Naive thymus-derived CD4-positive, alpha-beta T cell (primary cell): ENCODE measurements at regions of chr6 and their contacts with region 1.

Region 1: GRCh38 chr6:52337633-52338290 is 24.2 kb upstream of the PAQR8 start:
- DNase-seq: no peak
- ATAC-seq: no peak
- H3K4me3 ChIP-seq: no peak overlapping the region
- H3K4me3 Mint-ChIP-seq: peak overlapping the region in 2 of 10 donors; percentile 8 to 68
- H3K27ac ChIP-seq: no peak overlapping the region
- H3K27ac Mint-ChIP-seq: peak overlapping the region in 8 of 9 donors; percentile 11 to 94 (median 46)
- H3K4me1 ChIP-seq: peaks cover 28 to 58% of the 10 kb centered on the region in 2 donors
- H3K4me1 Mint-ChIP-seq: peaks cover 45 to 79% (median 75%) of the 10 kb centered on the region in 7 donors
- H3K27me3 ChIP-seq: no peaks in the 10 kb centered on the region
- H3K27me3 Mint-ChIP-seq: no peaks in the 10 kb centered on the region

Region 2: DNA sequence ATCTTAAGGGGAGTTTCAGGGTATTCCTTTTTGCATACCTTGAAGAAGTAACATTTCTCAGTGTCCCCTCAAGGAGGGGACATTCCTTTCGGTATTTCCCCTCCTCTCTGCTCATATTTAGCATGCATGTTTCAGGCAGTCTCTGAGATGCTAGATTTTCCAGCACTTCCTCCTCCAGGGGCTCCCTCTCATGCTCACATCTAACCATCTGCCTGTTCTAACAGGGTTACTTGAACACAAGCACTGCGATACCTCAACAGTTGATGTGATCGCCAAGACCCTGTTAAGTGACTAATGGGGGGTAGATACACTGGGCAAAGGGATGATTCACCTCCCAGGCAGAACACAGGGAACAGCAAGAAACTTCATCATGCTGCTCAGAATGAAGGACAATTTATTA is 40.3 kb before region 1 on chr6:
- CTCF ChIA-PET with region 1: no interaction called
- POLR2A ChIA-PET with region 1: no interaction called
- intact Hi-C with region 1: loop called in 1 of 2 experiments (anchors 5 kb)
- DNase-seq: no peak
- ATAC-seq: no peak
- H3K4me3 ChIP-seq: no peak overlapping the region
- H3K4me3 Mint-ChIP-seq: peak overlapping the region in 6 of 10 donors; percentile 6 to 53 (median 34)
- H3K27ac ChIP-seq: no peak overlapping the region
- H3K27ac Mint-ChIP-seq: peak overlapping the region in 6 of 9 donors; percentile 25 to 95 (median 64)
- H3K4me1 ChIP-seq: peaks cover 10 to 14% of the 10 kb centered on the region in 2 donors
- H3K4me1 Mint-ChIP-seq: peaks cover 20 to 59% (median 44%) of the 10 kb centered on the region in 7 donors
- H3K27me3 ChIP-seq: no peaks in the 10 kb centered on the region
- H3K27me3 Mint-ChIP-seq: no peaks in the 10 kb centered on the region

Region 3: GRCh38 chr6:52304983-52305390 is 32.8 kb before region 1 on chr6:
- CTCF ChIA-PET with region 1: interaction called, 4 read pairs
- POLR2A ChIA-PET with region 1: interaction called, 7 read pairs
- intact Hi-C with region 1: loop called in 1 of 2 experiments (anchors 1 kb)
- DNase-seq: peak in 1 of 9 donors; percentile 5
- ATAC-seq: peak; percentile 62
- H3K4me3 ChIP-seq: peak overlapping the region; percentile 20
- H3K4me3 Mint-ChIP-seq: peak overlapping the region; percentile 38 to 84 (median 74)
- H3K27ac ChIP-seq: peak overlapping the region; percentile 64
- H3K27ac Mint-ChIP-seq: peak overlapping the region; percentile 68 to 98 (median 96)
- H3K4me1 ChIP-seq: peaks cover 53 to 69% of the 10 kb centered on the region in 2 donors
- H3K4me1 Mint-ChIP-seq: peaks cover 47 to 88% (median 78%) of the 10 kb centered on the region in 7 donors
- H3K27me3 ChIP-seq: no peaks in the 10 kb centered on the region
- H3K27me3 Mint-ChIP-seq: no peaks in the 10 kb centered on the region